ENCODE measurements at regions of chr6 and their contacts with region 1.

Region 1: DNA sequence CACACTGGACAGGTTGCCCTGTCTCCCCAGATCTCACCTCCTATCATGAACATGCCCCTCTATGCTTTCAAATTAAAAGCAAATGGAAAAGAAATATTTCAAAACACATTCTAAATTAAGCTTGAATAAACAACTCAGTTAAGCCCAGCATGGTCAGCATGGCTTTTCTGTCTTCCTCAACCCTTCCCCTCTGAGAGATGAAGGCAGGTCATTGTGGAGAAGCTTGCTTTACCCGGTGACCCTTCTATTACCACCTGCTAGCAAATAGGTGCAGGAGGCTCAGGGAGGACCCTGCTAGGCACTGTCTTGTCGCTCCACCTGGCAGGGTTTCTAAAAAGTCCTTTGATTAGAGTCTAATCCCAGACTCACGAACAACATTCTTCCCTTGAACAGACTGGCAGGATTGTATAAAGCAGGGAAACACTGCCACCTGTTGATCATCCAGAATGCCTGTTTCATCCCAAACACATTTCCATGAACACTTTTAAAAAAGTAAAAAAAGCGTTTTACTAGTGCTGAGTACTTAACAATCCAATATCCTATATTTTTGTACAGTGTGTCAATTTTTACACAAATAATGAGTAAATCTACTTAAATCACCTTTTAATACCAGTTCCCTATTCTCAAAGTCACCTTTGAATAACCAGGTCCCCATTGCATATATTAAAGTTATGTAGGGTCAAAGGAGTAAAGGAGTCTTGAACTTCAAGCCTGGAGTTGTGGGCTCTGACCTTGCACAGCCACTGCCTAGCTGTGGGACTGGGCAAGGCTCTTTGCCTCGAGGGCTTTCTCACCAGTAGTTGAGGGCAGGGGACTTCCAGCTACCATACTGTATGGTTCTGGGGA is 75.5 kb downstream of the GPR6 start:
- DNase-seq: no peak
- H3K4me3 ChIP-seq: no peak overlapping the region
- H3K27ac ChIP-seq: no peak overlapping the region
- H3K4me1 ChIP-seq: peaks cover 0 to 13% (median 0%) of the 10 kb centered on the region in 3 donors
- H3K27me3 ChIP-seq: no peaks in the 10 kb centered on the region
- CTCF ChIP-seq: peak; percentile 57 to 79 (median 67)
- POLR2A ChIP-seq: no peak

Region 2: DNA sequence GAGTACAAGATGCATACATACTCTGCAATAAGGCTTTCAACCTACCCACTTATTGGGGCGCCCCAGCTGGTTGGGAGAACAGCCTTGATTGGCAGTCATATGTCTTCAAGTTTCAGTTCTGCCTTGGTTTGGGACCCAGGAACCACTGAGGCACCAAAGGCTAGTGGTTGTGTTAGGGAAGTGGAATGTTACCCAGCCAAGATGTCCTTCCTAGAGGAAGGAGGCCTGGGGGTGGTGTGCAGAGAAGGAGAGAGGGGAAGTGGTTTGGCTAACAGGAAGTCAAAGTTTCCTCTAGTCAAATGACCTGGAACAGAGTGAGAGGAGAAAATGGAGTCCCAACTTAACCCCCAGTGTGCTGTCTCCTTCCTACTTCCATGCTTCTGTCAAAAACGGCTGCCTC is 730.8 kb before region 1 on chr6:
- intact Hi-C with region 1: no loop called
- DNase-seq: no peak
- H3K4me3 ChIP-seq: no peak overlapping the region
- H3K27ac ChIP-seq: no peak overlapping the region
- H3K4me1 ChIP-seq: peaks cover 0 to 14% (median 9%) of the 10 kb centered on the region in 3 donors
- H3K27me3 ChIP-seq: no peaks in the 10 kb centered on the region
- CTCF ChIP-seq: no peak
- POLR2A ChIP-seq: no peak

Region 3: GRCh38 chr6:109705258-109705657 is 348.4 kb before region 1 on chr6:
- intact Hi-C with region 1: loop called (anchors 5 kb)
- DNase-seq: no peak
- H3K4me3 ChIP-seq: no peak overlapping the region
- H3K27ac ChIP-seq: no peak overlapping the region
- H3K4me1 ChIP-seq: peaks cover 0 to 29% (median 0%) of the 10 kb centered on the region in 3 donors
- H3K27me3 ChIP-seq: no peaks in the 10 kb centered on the region
- CTCF ChIP-seq: peak; percentile 87 to 99 (median 98)
- POLR2A ChIP-seq: no peak